Endothelial cell of umbilical vein (primary cell): ENCODE measurements at regions of chr10 and their contacts with region 1.

Region 1: DNA sequence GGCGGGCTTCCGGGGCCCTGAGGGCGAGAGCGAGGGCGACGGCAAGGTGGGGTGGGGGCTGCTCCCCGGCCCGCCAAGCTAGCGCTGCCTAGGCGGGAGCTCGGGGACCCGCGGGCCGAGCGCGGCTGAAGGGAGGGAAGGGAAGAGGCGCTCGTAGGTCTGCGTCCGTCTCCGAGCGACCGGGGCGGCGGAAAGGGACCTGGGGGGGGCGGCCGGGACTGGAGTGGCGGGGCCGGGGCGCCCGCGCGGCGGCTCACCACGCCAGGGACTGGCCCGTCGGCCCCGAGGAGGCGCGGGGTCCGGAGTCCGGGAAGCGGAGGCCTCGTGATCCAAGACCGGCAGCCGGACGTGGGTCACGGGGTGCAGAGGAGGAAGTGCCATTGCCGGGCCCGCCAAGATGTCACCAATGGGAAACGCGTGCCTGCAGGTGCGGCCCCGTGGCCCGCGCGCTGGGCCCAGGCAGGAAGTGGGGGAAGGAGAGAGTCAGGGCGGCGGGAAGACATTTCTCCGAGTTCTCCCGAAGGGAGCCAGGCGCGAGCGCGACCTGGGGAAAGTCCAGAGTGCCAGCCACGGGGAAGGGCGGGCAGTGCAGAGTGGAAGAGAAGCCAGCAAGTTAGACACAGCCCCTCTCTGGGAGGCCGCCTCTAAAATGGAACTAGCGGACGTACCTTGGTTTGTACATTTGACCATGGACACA is 11.9 kb downstream of the HNRNPF start:
- DNase-seq: peak; percentile 84
- H3K4me3 ChIP-seq: peak overlapping the region; percentile 13 to 79 (median 56)
- H3K27ac ChIP-seq: peak overlapping the region; percentile 77
- H3K4me1 ChIP-seq: peaks cover 43% of the 10 kb centered on the region
- H3K27me3 ChIP-seq: no peaks in the 10 kb centered on the region
- CTCF ChIP-seq: no peak
- POLR2A ChIP-seq: peak; percentile 13

Region 2: DNA sequence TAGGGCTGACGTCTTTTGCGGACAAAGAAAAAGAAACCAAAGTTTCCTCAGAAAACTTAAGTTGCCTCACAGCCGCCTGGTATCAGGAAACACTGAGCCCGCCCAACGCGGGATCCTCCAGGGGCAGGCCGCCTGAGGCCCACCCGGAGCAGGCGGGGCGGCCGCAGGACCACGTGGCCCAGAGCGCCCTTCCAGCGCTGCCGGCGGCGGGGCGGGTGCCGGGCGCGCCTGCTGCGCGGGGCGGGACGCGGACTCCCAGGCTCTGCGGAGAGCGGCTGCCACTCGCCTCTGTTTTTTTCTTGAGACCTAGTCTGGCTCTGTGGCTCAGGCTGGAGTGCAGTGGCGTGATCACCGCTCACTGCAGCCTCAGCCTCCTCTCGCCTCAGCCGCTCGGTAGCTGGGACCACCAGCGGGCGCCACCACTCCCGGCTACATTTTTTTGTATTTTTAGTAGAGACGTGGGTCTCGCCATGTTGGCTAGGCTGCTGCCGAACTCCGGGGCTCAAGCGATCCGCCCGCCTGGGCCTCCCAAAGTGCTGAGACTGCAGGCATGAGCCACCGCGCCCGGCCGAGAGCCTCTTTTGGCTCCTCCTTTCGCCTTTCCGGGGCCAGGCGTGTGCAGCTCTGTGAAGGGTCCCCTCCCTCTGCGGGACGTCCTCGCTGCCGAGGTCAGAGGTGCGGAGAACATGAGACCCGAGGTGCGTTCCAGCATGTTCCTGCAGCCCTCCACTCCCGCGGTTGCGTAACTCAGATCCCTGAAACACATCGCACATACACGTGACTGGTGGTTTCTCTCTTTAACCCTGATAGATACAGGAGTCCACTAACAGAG is 23.5 kb after region 1 on chr10:
- CTCF ChIA-PET with region 1: interaction called, 4 read pairs
- POLR2A ChIA-PET with region 1: interaction called, 3 read pairs
- dilution Hi-C with region 1: no loop called
- intact Hi-C with region 1: loop called (anchors 1 kb)
- DNase-seq: peak; percentile 84
- H3K4me3 ChIP-seq: peak overlapping the region; percentile 11 to 51 (median 37)
- H3K27ac ChIP-seq: peak overlapping the region; percentile 68
- H3K4me1 ChIP-seq: peaks cover 16% of the 10 kb centered on the region
- H3K27me3 ChIP-seq: no peaks in the 10 kb centered on the region
- CTCF ChIP-seq: peak in 1 of 2 donors; percentile 23
- POLR2A ChIP-seq: peak; percentile 68